Endothelial cell of umbilical vein (primary cell): ENCODE measurements at regions of chr10 and their contacts with region 1.

Region 1: GRCh38 chr10:120641695-120642094 is 184.7 kb downstream of the PLPP4 start:
- DNase-seq: peak; percentile 97
- H3K4me3 ChIP-seq: no peak overlapping the region
- H3K27ac ChIP-seq: peak overlapping the region; percentile 81
- H3K4me1 ChIP-seq: peaks cover 33% of the 10 kb centered on the region
- H3K27me3 ChIP-seq: no peaks in the 10 kb centered on the region
- CTCF ChIP-seq: no peak
- POLR2A ChIP-seq: peak; percentile 88

Region 2: GRCh38 chr10:120456626-120457430 is 184.9 kb before region 1 on chr10 and contains the start of gene PLPP4:
- CTCF ChIA-PET with region 1: interaction called, 4 read pairs
- POLR2A ChIA-PET with region 1: no interaction called
- dilution Hi-C with region 1: no loop called
- intact Hi-C with region 1: loop called (anchors 1 kb)
- DNase-seq: peak; percentile 72
- H3K4me3 ChIP-seq: peak within 1 kb of the TSS; percentile 33 to 58 (median 50)
- H3K27ac ChIP-seq: peak within 1 kb of the TSS; percentile 67
- H3K4me1 ChIP-seq: peaks cover 45% of the 10 kb centered on the region
- H3K27me3 ChIP-seq: peaks cover 0 to 3% of the 10 kb centered on the region in 2 experiments
- CTCF ChIP-seq: no peak
- POLR2A ChIP-seq: peak; percentile 49
- total RNA-seq, gene PLPP4: 15.5 and 17.1 TPM in 2 replicates

Region 3: GRCh38 chr10:120600871-120601649 is 40.6 kb before region 1 on chr10:
- CTCF ChIA-PET with region 1: interaction called, 11 read pairs
- POLR2A ChIA-PET with region 1: no interaction called
- dilution Hi-C with region 1: no loop called
- intact Hi-C with region 1: no loop called
- DNase-seq: peak; percentile 47
- H3K4me3 ChIP-seq: no peak overlapping the region
- H3K27ac ChIP-seq: no peak overlapping the region
- H3K4me1 ChIP-seq: peaks cover 5% of the 10 kb centered on the region
- H3K27me3 ChIP-seq: no peaks in the 10 kb centered on the region
- CTCF ChIP-seq: peak; percentile 51 to 71
- POLR2A ChIP-seq: no peak

Region 4: DNA sequence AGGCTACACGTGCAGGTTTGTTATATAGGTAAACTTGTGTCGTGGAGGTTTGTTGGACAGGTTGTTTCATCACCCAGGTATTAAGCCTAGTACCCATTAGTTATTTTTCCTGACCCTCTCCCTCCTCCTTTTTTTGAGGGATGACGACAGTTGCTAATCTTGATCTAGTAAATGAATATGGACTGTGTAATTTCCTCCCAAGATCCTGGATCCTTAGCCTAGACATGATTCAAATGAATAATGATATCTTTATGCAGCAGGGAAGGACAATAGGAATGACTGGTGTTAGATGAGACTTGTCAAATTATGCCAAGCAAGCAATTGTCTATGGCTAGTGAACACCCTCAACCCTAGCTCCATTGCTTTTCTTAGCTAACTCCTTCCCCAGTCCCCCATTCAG is 28.5 kb before region 1 on chr10:
- CTCF ChIA-PET with region 1: interaction called, 4 read pairs
- POLR2A ChIA-PET with region 1: no interaction called
- dilution Hi-C with region 1: no loop called
- intact Hi-C with region 1: loop called (anchors 1 kb)
- DNase-seq: peak; percentile 84
- H3K4me3 ChIP-seq: no peak overlapping the region
- H3K27ac ChIP-seq: peak overlapping the region; percentile 92
- H3K4me1 ChIP-seq: peaks cover 40% of the 10 kb centered on the region
- H3K27me3 ChIP-seq: no peaks in the 10 kb centered on the region
- CTCF ChIP-seq: no peak
- POLR2A ChIP-seq: no peak

Region 5: GRCh38 chr10:120684226-120684625 is 42.5 kb after region 1 on chr10:
- CTCF ChIA-PET with region 1: interaction called, 10 read pairs
- POLR2A ChIA-PET with region 1: interaction called, 7 read pairs
- dilution Hi-C with region 1: no loop called
- intact Hi-C with region 1: no loop called
- DNase-seq: peak; percentile 77
- H3K4me3 ChIP-seq: no peak overlapping the region
- H3K27ac ChIP-seq: peak overlapping the region; percentile 42
- H3K4me1 ChIP-seq: peaks cover 17% of the 10 kb centered on the region
- H3K27me3 ChIP-seq: no peaks in the 10 kb centered on the region
- CTCF ChIP-seq: no peak
- POLR2A ChIP-seq: no peak

Region 6: DNA sequence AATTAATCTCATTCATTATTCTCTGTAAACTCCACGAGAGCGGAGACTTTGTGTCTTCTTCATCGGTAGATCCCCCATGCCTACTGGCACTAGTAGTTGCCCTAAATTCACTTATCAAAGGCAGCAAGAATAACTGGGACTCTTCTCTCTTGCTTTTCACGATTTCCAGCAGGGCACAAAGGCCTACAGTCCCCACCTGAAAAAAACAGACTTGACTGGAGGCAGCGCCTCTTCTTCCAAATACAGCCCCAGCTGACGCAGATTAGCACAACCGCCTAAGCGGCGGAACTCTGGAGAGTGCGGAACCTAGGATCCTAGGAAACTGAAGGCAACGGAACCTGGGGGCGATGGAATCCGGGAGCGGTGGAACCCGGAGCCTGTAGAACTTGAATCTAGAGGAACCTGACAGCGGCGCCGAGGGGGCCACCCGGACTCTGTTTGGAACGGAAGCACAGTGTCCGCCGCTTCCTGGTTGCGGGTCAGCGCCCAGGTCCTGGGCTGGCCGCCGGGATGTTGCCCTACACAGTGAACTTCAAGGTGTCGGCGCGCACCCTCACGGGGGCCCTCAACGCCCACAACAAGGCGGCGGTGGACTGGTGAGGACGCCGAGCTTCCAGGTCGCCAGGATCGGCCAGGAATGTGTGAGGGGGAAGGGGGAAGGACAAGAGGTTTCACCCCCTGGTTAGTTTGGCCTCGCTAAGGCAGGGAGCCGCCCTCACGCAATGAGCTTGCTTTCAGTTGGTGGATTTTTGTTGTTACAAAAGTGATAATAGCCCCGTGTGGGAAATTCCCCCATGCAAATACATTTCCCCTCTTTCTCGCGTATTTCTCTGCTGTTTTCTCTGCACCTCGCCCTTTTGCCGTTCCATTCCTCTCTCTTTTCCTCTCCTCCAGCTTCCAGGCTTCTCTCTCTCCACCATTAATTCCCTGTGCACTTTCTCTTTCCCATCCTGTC is 209.5 kb after region 1 on chr10 and contains the start of gene WDR11:
- CTCF ChIA-PET with region 1: no interaction called
- POLR2A ChIA-PET with region 1: no interaction called
- dilution Hi-C with region 1: no loop called
- intact Hi-C with region 1: loop called (anchors 1 kb)
- DNase-seq: peak; percentile 88
- H3K4me3 ChIP-seq: peak within 1 kb of the TSS; percentile 42 to 92 (median 87)
- H3K27ac ChIP-seq: peak within 1 kb of the TSS; percentile 64
- H3K4me1 ChIP-seq: peaks cover 11% of the 10 kb centered on the region
- H3K27me3 ChIP-seq: no peaks in the 10 kb centered on the region
- CTCF ChIP-seq: no peak
- POLR2A ChIP-seq: peak; percentile 95
- total RNA-seq, gene WDR11: 58.9 and 73.9 TPM in 2 replicates